ENCODE measurements at regions of chrX and their contacts with region 1.

Region 1: DNA sequence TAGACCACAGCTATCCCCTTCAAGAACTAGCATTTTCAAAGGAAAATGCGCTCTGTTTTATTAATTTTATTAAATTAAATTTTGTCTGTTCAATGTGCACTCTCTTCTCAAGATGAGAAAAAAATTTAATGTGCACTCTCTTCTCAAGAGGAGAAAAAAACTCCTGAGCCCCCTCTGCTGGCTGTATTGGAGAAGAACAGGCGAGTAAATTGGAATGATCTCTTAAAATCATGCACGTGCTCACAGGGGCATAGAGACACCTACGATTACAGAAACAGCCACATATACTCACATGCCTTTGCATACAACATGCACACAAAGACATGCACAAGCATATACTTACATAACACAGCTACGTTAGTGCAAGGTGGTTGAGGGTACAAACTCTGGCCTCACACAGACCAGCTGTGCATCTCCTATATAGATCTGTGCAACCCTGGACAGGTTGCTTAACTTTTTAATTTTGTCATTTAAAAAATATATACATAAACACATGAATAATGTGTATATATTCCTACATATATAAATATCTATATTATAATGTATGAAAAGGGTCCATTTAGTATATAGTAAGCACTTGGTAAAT is 176.2 kb upstream of the CXorf66 start:
- DNase-seq: peak; percentile 63
- H3K4me3 Mint-ChIP-seq: no peak overlapping the region
- H3K27ac Mint-ChIP-seq: no peak overlapping the region
- H3K4me1 Mint-ChIP-seq: no peaks in the 10 kb centered on the region
- H3K27me3 Mint-ChIP-seq: no peaks in the 10 kb centered on the region

Region 2: GRCh38 chrX:140057001-140057411 is 84.5 kb before region 1 on chrX:
- intact Hi-C with region 1: loop called (anchors 1 kb)
- DNase-seq: peak; percentile 81
- H3K4me3 Mint-ChIP-seq: no peak overlapping the region
- H3K27ac Mint-ChIP-seq: no peak overlapping the region
- H3K4me1 Mint-ChIP-seq: peaks cover 2% of the 10 kb centered on the region
- H3K27me3 Mint-ChIP-seq: no peaks in the 10 kb centered on the region